ENCODE measurements at regions of chr9 and their contacts with region 1.

Region 1: GRCh38 chr9:85155352-85155751 is 485.8 kb downstream of the NTRK2 start:
- DNase-seq: no peak
- ATAC-seq: no peak
- H3K4me3 ChIP-seq: no peak overlapping the region
- H3K27ac ChIP-seq: no peak overlapping the region
- H3K4me1 ChIP-seq: no peaks in the 10 kb centered on the region
- CTCF ChIP-seq: no peak
- EP300 ChIP-seq: no peak
- POLR2A ChIP-seq: no peak
- RAD21 ChIP-seq: no peak

Region 2: GRCh38 chr9:85142968-85143367 is 12.4 kb before region 1 on chr9:
- CTCF ChIA-PET with region 1: interaction called, 13 read pairs
- POLR2A ChIA-PET with region 1: no interaction called
- DNase-seq: peak; percentile 3 to 16
- ATAC-seq: peak in 1 of 2 experiments; percentile 42; a peak in 1 of 6 replicates
- H3K4me3 ChIP-seq: no peak overlapping the region
- H3K27ac ChIP-seq: no peak overlapping the region
- H3K4me1 ChIP-seq: no peaks in the 10 kb centered on the region
- CTCF ChIP-seq: peak; percentile 19; the same call in 1 of the 3 replicates
- EP300 ChIP-seq: no peak
- POLR2A ChIP-seq: no peak
- RAD21 ChIP-seq: peak; percentile 17 to 48; a peak in 3 of 5 replicates

Measured in A549 (cell line).